Right cardiac atrium (tissue), 5 donors: ENCODE measurements at regions of chr1 and their contacts with region 1.

Region 1: DNA sequence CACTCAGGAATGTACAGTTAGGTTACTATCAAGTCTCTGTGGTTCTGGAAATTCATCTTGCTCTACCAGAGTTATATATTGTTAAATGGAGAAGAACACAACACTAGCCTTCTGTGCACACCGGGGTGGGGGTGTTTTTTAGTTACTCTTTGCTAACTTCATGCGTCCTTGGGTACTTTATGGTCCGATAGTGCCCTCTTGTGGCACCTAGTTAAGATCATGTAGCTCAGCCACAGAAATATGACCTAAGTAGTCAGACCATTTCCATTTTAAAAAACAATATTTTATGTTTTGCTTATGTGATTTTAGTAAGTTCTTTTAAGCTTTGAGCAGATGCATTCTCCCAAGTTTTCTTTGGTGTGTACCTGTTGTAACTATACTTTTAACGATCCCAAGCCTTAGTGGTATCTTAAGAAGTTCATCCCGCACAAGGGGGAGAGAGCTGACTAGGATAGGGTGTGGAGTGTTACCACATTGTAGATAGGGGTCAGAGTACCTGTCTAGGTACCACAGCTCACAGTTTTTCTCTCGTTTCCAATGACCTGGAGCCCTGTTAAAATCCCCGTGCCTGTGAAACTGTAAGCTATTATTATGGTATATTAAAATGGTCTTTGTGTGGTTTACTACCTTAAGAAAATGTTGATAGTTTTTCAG is 20.6 kb upstream of the SH3D21 start:
- DNase-seq: peak in 1 of 3 donors; percentile 38
- ATAC-seq: peak; percentile 79 to 82
- H3K4me3 ChIP-seq: no peak overlapping the region
- H3K27ac ChIP-seq: no peak overlapping the region
- H3K4me1 ChIP-seq: no peaks in the 10 kb centered on the region
- H3K27me3 ChIP-seq: no peaks in the 10 kb centered on the region

Region 2: GRCh38 chr1:35971601-35972000 is 314.0 kb before region 1 on chr1:
- intact Hi-C with region 1: no loop called
- DNase-seq: no peak
- ATAC-seq: no peak
- H3K4me3 ChIP-seq: no peak overlapping the region
- H3K27ac ChIP-seq: no peak overlapping the region
- H3K4me1 ChIP-seq: no peaks in the 10 kb centered on the region
- H3K27me3 ChIP-seq: no peaks in the 10 kb centered on the region

Region 3: GRCh38 chr1:36099681-36100341 is 185.8 kb before region 1 on chr1:
- intact Hi-C with region 1: loop called in 1 of 4 experiments (anchors 5 kb)
- DNase-seq: peak; percentile 81 to 95 (median 93)
- ATAC-seq: peak; percentile 79 to 83
- H3K4me3 ChIP-seq: no peak overlapping the region
- H3K27ac ChIP-seq: no peak overlapping the region
- H3K4me1 ChIP-seq: no peaks in the 10 kb centered on the region
- H3K27me3 ChIP-seq: no peaks in the 10 kb centered on the region

Region 4: GRCh38 chr1:36149237-36149972 is 136.2 kb before region 1 on chr1 and contains the start of gene TRAPPC3:
- intact Hi-C with region 1: loop called (anchors 5 to 10 kb)
- DNase-seq: peak; percentile 100
- ATAC-seq: peak; percentile 94 to 95
- H3K4me3 ChIP-seq: peak within 1 kb of the TSS; percentile 53
- H3K27ac ChIP-seq: peak within 1 kb of the TSS; percentile 99
- H3K4me1 ChIP-seq: peaks cover 10% of the 10 kb centered on the region
- H3K27me3 ChIP-seq: no peaks in the 10 kb centered on the region
- total RNA-seq, gene TRAPPC3: 58.5 to 67.2 (median 64.0) TPM

Region 5: DNA sequence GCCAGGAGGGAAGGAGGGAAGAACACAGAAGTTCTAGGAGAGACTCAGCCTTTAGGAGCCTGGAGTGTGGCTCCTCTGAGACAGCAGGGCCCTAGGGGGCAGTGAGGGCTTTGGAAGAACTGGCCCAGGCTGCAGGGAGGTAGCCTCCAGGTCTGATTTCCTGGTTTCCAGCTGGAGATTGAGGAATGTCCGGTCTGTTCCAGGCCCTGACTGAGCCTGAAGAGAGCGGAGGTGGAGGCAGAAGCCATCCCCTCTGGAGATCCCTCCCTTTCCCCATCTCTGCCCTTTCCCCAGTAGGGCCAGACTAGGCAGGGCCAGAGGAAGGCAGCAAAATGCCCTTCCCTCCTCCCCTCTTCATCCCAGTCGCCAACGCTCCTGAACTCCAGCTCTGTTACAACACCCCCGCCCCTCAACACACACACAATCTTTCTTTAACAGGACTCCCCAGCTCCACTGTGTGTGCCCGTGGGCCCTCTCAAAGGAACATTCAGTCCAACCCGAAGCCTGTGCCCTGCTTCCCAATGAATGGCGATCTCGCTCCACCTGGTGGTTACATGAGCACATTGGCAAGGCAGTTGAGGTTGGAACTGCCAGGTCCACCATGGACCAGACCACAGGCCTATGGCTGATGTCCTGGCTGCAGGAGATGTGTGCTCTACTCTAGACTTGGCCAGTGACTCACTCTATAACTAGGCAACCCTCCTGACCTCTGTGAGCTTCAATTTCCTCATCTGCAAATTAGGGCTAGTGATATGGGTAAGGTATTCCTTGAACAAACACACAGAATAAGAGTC is 97.6 kb before region 1 on chr1:
- intact Hi-C with region 1: loop called in 1 of 4 experiments (anchors 10 kb)
- DNase-seq: peak; percentile 87 to 92 (median 91)
- ATAC-seq: peak; percentile 92 to 94
- H3K4me3 ChIP-seq: no peak overlapping the region
- H3K27ac ChIP-seq: peak overlapping the region; percentile 93
- H3K4me1 ChIP-seq: peaks cover 3% of the 10 kb centered on the region
- H3K27me3 ChIP-seq: no peaks in the 10 kb centered on the region

Region 6: DNA sequence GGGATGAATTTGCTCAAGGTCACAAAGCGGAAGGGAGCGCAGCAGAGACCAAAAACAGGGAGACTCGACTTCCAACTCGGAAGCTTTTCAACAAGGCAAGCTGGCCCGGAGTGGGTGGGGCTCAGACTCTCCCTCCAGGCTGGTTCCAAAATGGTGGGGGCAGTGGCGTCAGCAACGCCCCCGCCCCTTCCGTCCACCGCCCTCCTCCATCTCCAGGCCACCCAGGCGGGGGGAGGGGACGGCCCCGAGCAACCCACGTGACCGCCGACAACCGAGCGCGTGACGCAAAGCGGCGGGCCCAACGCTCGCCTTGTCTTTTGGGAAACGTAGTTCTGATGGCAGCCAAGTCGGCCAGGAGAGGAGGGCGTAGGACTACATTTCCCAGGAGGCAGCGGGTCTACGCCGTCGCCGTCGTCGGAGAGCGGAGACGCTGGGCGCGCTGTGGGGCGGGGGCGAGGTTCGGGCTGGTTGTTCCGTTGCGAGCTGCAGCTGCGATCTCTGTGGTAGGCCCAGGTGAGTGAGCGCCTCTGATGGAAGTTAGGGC is 61.5 kb before region 1 on chr1 and contains the start of gene THRAP3:
- intact Hi-C with region 1: loop called in 1 of 4 experiments (anchors 10 kb)
- DNase-seq: peak; percentile 99 to 100 (median 100)
- ATAC-seq: peak; percentile 98 to 99
- H3K4me3 ChIP-seq: peak within 1 kb of the TSS; percentile 60
- H3K27ac ChIP-seq: peak within 1 kb of the TSS; percentile 98
- H3K4me1 ChIP-seq: no peaks in the 10 kb centered on the region
- H3K27me3 ChIP-seq: no peaks in the 10 kb centered on the region
- total RNA-seq, gene THRAP3: 66.3 to 85.5 (median 77.3) TPM

Region 7: DNA sequence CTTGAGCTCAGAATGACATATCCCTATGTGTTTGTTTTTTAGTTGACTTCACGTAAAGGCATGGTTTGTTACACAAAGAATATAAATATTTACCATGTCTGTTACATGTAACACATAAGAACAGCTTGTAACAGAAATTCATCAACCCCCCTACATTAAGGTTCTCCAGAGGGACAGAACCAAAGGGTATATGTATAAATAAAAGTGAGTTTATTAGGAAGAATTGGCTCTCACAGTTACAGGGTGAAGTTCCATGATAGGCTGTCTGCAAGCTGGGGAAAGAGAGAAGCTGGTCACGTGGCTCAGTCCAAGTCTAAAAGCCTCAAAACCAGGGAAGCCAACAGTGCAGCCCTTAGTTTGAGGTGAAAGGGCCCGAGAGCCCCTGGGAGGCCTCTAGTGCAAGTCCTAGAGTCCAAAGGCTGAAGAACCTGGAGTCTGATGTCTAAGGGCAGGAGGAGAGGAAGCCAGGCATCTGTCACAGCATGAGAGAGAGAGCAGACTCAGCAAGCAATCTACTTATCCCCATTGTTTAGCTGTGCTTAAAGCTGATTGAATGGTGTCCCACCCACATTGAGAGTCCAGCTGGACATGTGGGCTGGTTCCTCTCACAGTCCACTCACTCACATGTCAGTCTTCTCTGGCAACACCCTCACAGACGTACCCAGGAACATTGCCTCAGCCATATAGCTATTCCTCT is 45.5 kb before region 1 on chr1:
- intact Hi-C with region 1: loop called in 2 of 4 experiments (anchors 10 kb)
- DNase-seq: no peak
- ATAC-seq: peak; percentile 88 to 89
- H3K4me3 ChIP-seq: no peak overlapping the region
- H3K27ac ChIP-seq: peak overlapping the region; percentile 77
- H3K4me1 ChIP-seq: peaks cover 6% of the 10 kb centered on the region
- H3K27me3 ChIP-seq: no peaks in the 10 kb centered on the region